Heart right ventricle (tissue), 16 donors: ENCODE measurements at regions of chr12 and their contacts with region 1.

Region 1: GRCh38 chr12:52992699-52993557 is 13.3 kb upstream of the EIF4B start:
- DNase-seq: no peak
- ATAC-seq: no peak
- H3K4me3 ChIP-seq: no peak overlapping the region
- H3K27ac ChIP-seq: no peak overlapping the region
- H3K4me1 ChIP-seq: no peaks in the 10 kb centered on the region
- H3K27me3 ChIP-seq: no peaks in the 10 kb centered on the region
- CTCF ChIP-seq: no peak

Region 2: GRCh38 chr12:52147367-52147972 is 845.5 kb before region 1 on chr12:
- intact Hi-C with region 1: loop called in 3 of 10 experiments (anchors 5 to 10 kb)
- DNase-seq: peak; percentile 83 to 88
- ATAC-seq: peak; percentile 64 to 94 (median 88)
- H3K4me3 ChIP-seq: no peak overlapping the region
- H3K27ac ChIP-seq: peak overlapping the region; percentile 29 to 91 (median 79)
- H3K4me1 ChIP-seq: peaks cover 27 to 56% (median 42%) of the 10 kb centered on the region in 9 donors
- H3K27me3 ChIP-seq: peaks cover 0 to 8% (median 0%) of the 10 kb centered on the region in 7 donors
- CTCF ChIP-seq: no peak